Mucosa of descending colon (tissue), 3 donors: ENCODE measurements at regions of chr7 and their contacts with region 1.

Region 1: DNA sequence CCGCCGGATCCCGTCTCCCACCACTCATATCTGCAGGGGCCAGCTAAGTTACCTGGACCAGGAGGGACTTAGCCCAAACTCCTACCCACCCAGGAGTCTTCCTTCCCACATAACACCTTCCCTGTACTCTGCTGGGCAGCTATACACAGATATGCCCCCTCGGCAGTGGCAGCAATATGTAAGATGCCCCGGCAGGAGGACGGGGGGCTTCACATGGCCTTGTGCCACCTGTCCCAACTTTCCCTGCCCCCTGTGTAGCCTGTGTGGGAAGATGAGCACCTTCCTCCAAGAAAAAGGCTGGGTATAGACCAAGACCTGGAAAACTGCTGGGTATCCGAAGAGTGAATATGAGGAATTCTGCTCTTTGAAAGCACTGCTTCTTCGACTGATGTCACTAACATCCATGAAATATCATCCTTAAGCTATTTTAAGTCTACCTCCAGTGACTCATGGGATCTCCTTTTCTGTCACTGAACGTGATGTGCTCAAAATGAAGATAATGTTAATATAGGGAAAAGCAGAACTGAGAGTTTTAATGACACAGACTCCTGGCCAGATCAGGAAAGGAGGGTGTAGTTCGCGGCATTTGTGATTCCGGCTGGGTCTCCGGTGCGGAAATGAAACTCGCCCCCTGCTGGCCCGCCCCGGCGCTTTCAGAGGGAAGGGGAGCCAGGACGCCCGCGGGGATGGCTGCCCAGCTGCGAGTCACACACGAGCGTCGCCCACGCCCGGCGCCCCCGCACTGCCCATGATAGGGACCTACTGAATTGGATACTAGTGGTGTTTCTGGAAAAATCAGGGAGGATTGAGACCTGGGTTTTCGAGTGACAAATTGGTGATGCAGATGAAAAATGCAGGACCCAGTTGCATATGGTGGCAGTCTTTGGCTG is 256.9 kb upstream of the NFE2L3 start:
- DNase-seq: peak; percentile 81 to 84 (median 82)
- ATAC-seq: peak; percentile 82
- H3K4me3 ChIP-seq: no peak overlapping the region
- H3K4me1 ChIP-seq: peaks cover 12% of the 10 kb centered on the region
- CTCF ChIP-seq: peak; percentile 72

Region 2: GRCh38 chr7:25619963-25620799 is 275.0 kb before region 1 on chr7:
- intact Hi-C with region 1: no loop called
- DNase-seq: no peak
- ATAC-seq: peak; percentile 77
- H3K4me3 ChIP-seq: no peak overlapping the region
- H3K4me1 ChIP-seq: peaks cover 7% of the 10 kb centered on the region
- CTCF ChIP-seq: no peak

Region 3: GRCh38 chr7:25944777-25945515 is 49.8 kb after region 1 on chr7:
- intact Hi-C with region 1: loop called in 1 of 2 experiments (anchors 2 kb)
- DNase-seq: peak; percentile 66 to 73 (median 69)
- ATAC-seq: peak; percentile 78
- H3K4me3 ChIP-seq: no peak overlapping the region
- H3K4me1 ChIP-seq: peaks cover 35% of the 10 kb centered on the region
- CTCF ChIP-seq: no peak

Region 4: DNA sequence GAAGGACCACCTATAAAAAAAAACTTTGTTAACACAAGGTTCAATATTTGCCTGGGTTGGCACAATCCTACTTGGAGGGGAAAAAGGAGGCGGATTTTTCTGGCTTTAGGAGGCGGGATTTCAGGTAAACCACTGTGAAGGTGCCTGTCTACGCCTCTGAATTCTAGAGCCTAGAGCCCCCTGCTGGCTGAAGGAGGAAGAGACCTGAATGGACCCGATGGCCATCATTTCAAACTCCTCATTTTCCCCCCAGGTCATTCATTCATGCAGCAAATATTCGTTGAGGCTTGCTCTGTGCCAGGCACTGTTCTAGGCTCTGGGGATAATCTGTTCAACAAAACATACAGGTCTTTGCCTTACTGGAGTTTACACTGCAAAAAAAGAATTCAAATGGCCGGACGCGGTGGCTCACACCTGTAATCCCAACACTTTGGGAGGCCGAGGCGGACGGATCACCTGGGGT is 166.6 kb after region 1 on chr7:
- intact Hi-C with region 1: loop called (anchors 2 to 10 kb)
- DNase-seq: peak in 2 of 3 donors; percentile 75 to 93
- ATAC-seq: peak; percentile 94
- H3K4me3 ChIP-seq: no peak overlapping the region
- H3K4me1 ChIP-seq: no peaks in the 10 kb centered on the region
- CTCF ChIP-seq: peak; percentile 62